ENCODE measurements at regions of chr2 and their contacts with region 1.

Region 1: GRCh38 chr2:71331581-71332434 is at the start of gene ZNF638:
- DNase-seq: peak; percentile 78
- H3K4me3 ChIP-seq: peak within 1 kb of the TSS; percentile 98
- H3K27ac ChIP-seq: peak within 1 kb of the TSS; percentile 80
- H3K27me3 ChIP-seq: peaks cover 2% of the 10 kb centered on the region
- CTCF ChIP-seq: peak; percentile 67
- polyA plus RNA-seq, gene ZNF638: 75.3 and 105 TPM in 2 replicates

Region 2: DNA sequence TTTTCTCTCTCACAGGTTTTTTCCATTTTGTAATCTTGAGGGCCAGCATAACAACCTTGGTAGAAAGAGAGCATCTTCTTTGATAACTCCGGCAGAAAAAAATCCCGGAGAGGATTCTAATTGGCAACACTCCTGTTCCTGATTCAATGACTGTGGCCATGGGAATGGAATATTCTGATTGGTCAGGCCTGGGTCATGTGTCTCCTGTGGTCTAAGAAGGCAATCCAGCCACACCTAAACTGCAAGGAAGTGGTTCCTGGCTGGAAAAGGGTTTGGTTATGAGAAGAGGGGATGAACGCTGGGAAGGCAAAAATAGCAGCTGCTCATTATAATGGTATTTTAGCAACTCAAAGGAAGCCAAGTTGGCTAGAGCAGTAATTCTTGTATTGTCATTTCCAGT is 25.0 kb before region 1 on chr2:
- CTCF ChIA-PET with region 1: interaction called, 15 read pairs
- POLR2A ChIA-PET with region 1: no interaction called
- DNase-seq: no peak
- H3K4me3 ChIP-seq: no peak overlapping the region
- H3K27ac ChIP-seq: no peak overlapping the region
- H3K27me3 ChIP-seq: peaks cover 2% of the 10 kb centered on the region
- CTCF ChIP-seq: no peak

Region 3: GRCh38 chr2:71353248-71353647 is 21.4 kb after region 1 on chr2:
- CTCF ChIA-PET with region 1: interaction called, 20 read pairs
- POLR2A ChIA-PET with region 1: no interaction called
- DNase-seq: no peak
- H3K4me3 ChIP-seq: no peak overlapping the region
- H3K27ac ChIP-seq: no peak overlapping the region
- H3K27me3 ChIP-seq: no peaks in the 10 kb centered on the region
- CTCF ChIP-seq: no peak

Region 4: GRCh38 chr2:71393216-71393615 is 61.4 kb after region 1 on chr2:
- CTCF ChIA-PET with region 1: interaction called, 15 read pairs
- POLR2A ChIA-PET with region 1: interaction called, 6 read pairs
- DNase-seq: no peak
- H3K4me3 ChIP-seq: no peak overlapping the region
- H3K27ac ChIP-seq: no peak overlapping the region
- H3K27me3 ChIP-seq: no peaks in the 10 kb centered on the region
- CTCF ChIP-seq: no peak

Region 5: DNA sequence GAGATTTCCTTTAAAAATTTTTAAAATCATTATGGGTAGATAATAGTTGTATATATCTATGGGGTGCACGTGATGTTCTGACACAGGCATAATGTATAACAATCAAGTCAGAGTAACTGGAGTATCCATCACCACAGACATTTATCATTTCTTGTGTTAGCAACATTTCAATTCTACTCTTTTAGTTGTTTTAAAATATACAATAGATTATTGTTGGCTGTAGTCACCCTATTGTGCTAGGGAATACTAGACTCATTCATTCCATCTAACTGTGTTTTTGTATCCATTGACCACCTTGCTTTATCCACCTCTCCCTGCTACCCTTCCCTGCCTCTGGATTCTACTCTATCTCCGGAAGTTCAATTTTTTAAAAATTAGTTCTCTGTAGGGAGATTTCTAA is 152.5 kb after region 1 on chr2:
- CTCF ChIA-PET with region 1: interaction called, 12 read pairs
- POLR2A ChIA-PET with region 1: no interaction called
- DNase-seq: no peak
- H3K4me3 ChIP-seq: no peak overlapping the region
- H3K27ac ChIP-seq: no peak overlapping the region
- H3K27me3 ChIP-seq: peaks cover 23% of the 10 kb centered on the region
- CTCF ChIP-seq: no peak

Measured in AG04450 (cell line).